ENCODE measurements at regions of chr7 and their contacts with region 1.

Region 1: GRCh38 chr7:100469227-100470044 is 5.4 kb upstream of the SPACDR start:
- DNase-seq: peak; percentile 66
- ATAC-seq: peak; percentile 83
- H3K4me3 ChIP-seq: no peak overlapping the region
- H3K27ac ChIP-seq: peak overlapping the region; percentile 65
- H3K4me1 ChIP-seq: peaks cover 18% of the 10 kb centered on the region
- H3K27me3 ChIP-seq: no peaks in the 10 kb centered on the region
- CTCF ChIP-seq: peak; percentile 96

Region 2: GRCh38 chr7:100435401-100436304 is 33.8 kb before region 1 on chr7:
- CTCF ChIA-PET with region 1: interaction called, 11 read pairs
- POLR2A ChIA-PET with region 1: no interaction called
- in situ Hi-C with region 1: no loop called
- intact Hi-C with region 1: no loop called
- DNase-seq: no peak
- ATAC-seq: peak; percentile 68
- H3K4me3 ChIP-seq: peak overlapping the region; percentile 67 to 82
- H3K27ac ChIP-seq: peak overlapping the region; percentile 86
- H3K4me1 ChIP-seq: peaks cover 43% of the 10 kb centered on the region
- H3K27me3 ChIP-seq: no peaks in the 10 kb centered on the region
- CTCF ChIP-seq: no peak

Region 3: GRCh38 chr7:100521076-100521475 is 51.6 kb after region 1 on chr7:
- CTCF ChIA-PET with region 1: interaction called, 10 read pairs
- POLR2A ChIA-PET with region 1: interaction called, 7 read pairs
- in situ Hi-C with region 1: no loop called
- intact Hi-C with region 1: no loop called
- DNase-seq: no peak
- ATAC-seq: no peak
- H3K4me3 ChIP-seq: no peak overlapping the region
- H3K27ac ChIP-seq: no peak overlapping the region
- H3K4me1 ChIP-seq: no peaks in the 10 kb centered on the region
- H3K27me3 ChIP-seq: no peaks in the 10 kb centered on the region
- CTCF ChIP-seq: no peak

Region 4: DNA sequence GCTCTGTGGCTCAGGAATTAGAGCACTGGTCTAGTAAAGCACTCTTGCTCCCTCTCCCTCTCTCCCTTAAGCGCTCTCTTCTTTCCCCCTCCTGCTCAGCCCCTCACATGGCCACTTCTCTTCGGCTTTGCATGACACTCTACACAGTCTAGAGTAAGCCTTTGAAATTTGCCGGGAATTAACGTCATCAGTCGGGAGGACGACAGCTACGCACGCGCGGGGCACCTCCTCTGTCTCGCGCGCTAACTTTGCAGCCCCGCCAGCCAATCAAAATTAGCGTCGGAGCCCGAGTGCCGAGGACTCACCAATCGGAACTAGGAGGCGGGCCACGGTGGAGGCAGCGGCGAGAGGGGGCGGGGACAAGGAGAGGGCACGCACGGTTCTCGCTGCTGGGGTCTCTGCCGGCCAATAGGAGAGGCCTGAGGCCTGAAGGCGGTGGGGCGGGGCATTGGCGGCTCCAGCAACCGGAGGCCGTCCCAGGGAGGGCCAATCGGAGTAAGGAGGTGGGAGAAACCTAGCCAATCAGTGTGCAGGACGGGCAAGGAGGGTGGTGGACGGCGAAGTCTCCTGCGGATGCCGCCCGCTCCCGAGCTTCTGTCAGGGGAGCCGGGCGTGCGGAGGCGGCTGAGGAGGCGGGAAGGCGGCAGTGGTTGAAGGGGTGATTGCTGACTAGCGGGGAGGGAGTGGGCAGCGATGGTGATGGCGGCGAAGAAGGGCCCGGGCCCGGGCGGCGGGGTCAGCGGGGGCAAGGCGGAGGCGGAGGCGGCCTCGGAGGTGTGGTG is 69.4 kb after region 1 on chr7 and contains the start of gene AGFG2:
- CTCF ChIA-PET with region 1: no interaction called
- POLR2A ChIA-PET with region 1: interaction called, 23 read pairs
- in situ Hi-C with region 1: no loop called
- intact Hi-C with region 1: no loop called
- DNase-seq: peak; percentile 99
- ATAC-seq: peak; percentile 99
- H3K4me3 ChIP-seq: peak within 1 kb of the TSS; percentile 70 to 71
- H3K27ac ChIP-seq: peak within 1 kb of the TSS; percentile 72
- H3K4me1 ChIP-seq: peaks cover 20% of the 10 kb centered on the region
- H3K27me3 ChIP-seq: no peaks in the 10 kb centered on the region
- CTCF ChIP-seq: no peak
- total RNA-seq, gene AGFG2: 42.5 TPM

Region 5: DNA sequence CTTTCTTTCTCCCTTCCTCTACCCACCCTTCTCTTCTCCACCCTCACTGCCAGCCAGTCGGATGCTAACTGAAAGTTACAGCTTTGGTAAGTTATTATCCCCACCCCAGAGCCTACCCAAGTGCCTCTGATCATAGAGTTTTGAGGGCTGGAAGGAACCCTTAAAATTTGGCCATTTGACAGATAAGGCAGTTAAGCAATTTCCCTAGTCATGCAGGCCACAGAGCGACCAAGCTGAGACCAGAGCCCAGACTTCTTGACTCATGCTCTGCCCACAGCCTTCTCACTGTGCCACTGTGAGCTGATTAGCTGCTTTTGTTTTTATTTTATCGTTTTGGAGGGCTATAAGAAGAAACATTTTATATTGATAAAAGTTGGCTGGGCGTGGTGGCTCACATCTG is 87.1 kb after region 1 on chr7:
- CTCF ChIA-PET with region 1: interaction called, 12 read pairs
- POLR2A ChIA-PET with region 1: no interaction called
- in situ Hi-C with region 1: no loop called
- intact Hi-C with region 1: loop called (anchors 1 kb)
- DNase-seq: no peak
- ATAC-seq: no peak
- H3K4me3 ChIP-seq: no peak overlapping the region
- H3K27ac ChIP-seq: no peak overlapping the region
- H3K4me1 ChIP-seq: no peaks in the 10 kb centered on the region; the same call in 1 of the 2 replicates
- H3K27me3 ChIP-seq: no peaks in the 10 kb centered on the region
- CTCF ChIP-seq: no peak

Region 6: GRCh38 chr7:100595188-100595587 is 125.8 kb after region 1 on chr7:
- CTCF ChIA-PET with region 1: no interaction called
- POLR2A ChIA-PET with region 1: interaction called, 12 read pairs
- in situ Hi-C with region 1: no loop called
- intact Hi-C with region 1: no loop called
- DNase-seq: no peak
- ATAC-seq: no peak
- H3K4me3 ChIP-seq: no peak overlapping the region
- H3K27ac ChIP-seq: no peak overlapping the region
- H3K4me1 ChIP-seq: no peaks in the 10 kb centered on the region
- H3K27me3 ChIP-seq: no peaks in the 10 kb centered on the region
- CTCF ChIP-seq: no peak

Measured in Panc1 (cell line).